Posterior vena cava (tissue), 2 donors: ENCODE measurements at regions of chr12 and their contacts with region 1.

Region 1: GRCh38 chr12:65668981-65669695 is 155.1 kb upstream of the HMGA2 start:
- DNase-seq: no peak

Region 2: GRCh38 chr12:65648461-65648860 is 20.7 kb before region 1 on chr12:
- intact Hi-C with region 1: loop called in 1 of 2 experiments (anchors 1 kb)
- DNase-seq: no peak

Region 3: DNA sequence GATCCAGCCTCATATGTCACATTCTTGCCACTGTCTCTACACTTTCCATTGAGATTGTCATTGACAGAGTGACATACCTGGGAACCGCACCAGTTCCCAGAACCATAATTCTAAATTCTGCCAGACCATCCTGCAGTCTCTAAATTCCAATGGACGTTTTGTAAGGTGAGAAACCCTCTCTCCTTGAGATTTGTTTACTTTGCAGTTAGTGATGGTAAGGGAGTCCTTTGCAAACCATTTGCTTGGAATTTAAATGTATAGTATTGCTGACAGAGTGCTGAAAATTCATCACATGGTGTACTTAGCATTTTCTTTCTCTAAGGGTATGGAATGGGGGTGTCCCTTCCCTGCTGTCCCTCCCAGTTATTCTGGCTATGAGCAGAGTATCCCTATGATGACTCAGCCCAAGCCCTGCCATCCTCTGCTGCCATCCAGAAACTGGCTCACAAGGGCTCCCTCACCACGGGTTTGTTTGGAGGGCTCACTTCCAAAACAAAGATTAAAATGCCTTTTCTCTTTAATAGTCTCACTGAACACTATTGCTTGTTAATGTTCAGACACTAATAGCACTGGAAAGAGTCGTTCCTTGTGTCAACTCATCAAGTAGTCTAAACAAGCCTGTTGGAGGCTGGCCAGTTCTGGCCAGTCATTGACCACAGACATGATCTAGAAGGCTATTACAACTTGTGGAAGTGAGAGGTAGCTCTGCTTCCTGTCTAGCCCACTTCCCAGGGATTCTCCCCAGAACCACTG is 26.2 kb after region 1 on chr12:
- intact Hi-C with region 1: no loop called
- DNase-seq: no peak